Naive thymus-derived CD4-positive, alpha-beta T cell (primary cell): ENCODE measurements at regions of chr3 and their contacts with region 1.

Region 1: GRCh38 chr3:63863148-63864007 is at the starts of genes ATXN7 and THOC7:
- DNase-seq: peak; percentile 51 to 78 (median 74)
- ATAC-seq: peak; percentile 91
- H3K4me3 ChIP-seq: peak within 1 kb of the TSS; percentile 71
- H3K4me3 Mint-ChIP-seq: peak within 1 kb of the TSS; percentile 81 to 95 (median 93)
- H3K27ac ChIP-seq: peak within 1 kb of the TSS; percentile 84
- H3K27ac Mint-ChIP-seq: peak within 1 kb of the TSS; percentile 81 to 96 (median 93)
- H3K4me1 ChIP-seq: peaks cover 8 to 17% of the 10 kb centered on the region in 2 donors
- H3K4me1 Mint-ChIP-seq: peaks cover 39 to 74% (median 69%) of the 10 kb centered on the region in 7 donors
- H3K27me3 ChIP-seq: no peaks in the 10 kb centered on the region
- H3K27me3 Mint-ChIP-seq: no peaks in the 10 kb centered on the region
- total RNA-seq, gene ATXN7: 72.2 to 204 (median 160) TPM
- total RNA-seq, gene THOC7: 24.6 to 86.2 (median 38.7) TPM

Region 2: DNA sequence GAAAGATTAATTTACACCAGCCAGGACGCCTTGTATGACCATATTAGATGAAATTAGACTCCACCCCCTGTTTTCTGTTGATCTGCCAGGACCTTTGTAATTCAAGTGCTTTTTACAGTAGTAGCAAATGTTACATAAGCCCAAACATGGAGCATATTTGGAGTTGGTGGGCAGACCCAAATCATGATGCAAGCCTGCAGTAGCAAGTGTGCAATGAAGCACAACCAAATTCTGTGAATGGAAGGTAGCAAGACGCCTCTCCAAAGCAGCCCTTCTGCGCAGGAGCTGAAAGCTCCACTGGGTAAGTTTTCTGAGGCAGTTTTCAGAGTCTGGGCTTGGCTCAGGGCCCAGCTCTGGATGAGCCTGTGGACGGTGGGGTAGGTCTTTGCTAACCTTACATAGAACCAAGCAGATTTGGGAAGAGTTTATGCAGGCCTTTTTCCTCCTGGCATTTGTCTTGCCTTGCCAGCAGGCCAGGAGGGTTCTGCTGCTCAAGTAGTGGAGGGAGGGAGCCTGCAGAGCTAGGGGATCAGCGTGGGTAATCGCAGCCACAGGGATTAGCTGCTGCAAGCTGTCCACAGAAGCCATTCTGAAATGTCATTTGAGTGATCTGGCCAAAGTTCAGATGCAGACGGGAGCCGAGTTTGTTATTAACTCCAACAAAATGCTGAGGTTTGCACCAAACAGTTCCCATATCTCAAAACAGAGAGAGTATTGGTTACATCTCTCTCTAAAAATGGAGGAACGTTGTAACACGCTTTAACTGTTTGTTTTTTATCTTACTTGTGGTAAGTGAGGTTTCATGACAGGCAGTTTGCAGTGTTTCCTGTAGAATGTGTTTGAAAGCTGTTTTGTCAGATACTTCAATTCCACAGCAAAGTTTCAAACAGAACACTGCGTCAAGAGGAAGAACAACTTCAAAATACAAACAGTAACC is 104.6 kb after region 1 on chr3:
- CTCF ChIA-PET with region 1: no interaction called
- POLR2A ChIA-PET with region 1: interaction called, 4 read pairs
- intact Hi-C with region 1: loop called (anchors 2 to 5 kb)
- DNase-seq: peak; percentile 14 to 93 (median 87)
- ATAC-seq: peak; percentile 88
- H3K4me3 ChIP-seq: peak overlapping the region; percentile 91
- H3K4me3 Mint-ChIP-seq: peak overlapping the region; percentile 86 to 98 (median 92)
- H3K27ac ChIP-seq: peak overlapping the region; percentile 80
- H3K27ac Mint-ChIP-seq: peak overlapping the region; percentile 92 to 99 (median 96)
- H3K4me1 ChIP-seq: peaks cover 46 to 48% of the 10 kb centered on the region in 2 donors
- H3K4me1 Mint-ChIP-seq: peaks cover 43 to 78% (median 65%) of the 10 kb centered on the region in 7 donors
- H3K27me3 ChIP-seq: no peaks in the 10 kb centered on the region
- H3K27me3 Mint-ChIP-seq: no peaks in the 10 kb centered on the region

Region 3: GRCh38 chr3:64109438-64109837 is 246.1 kb after region 1 on chr3:
- CTCF ChIA-PET with region 1: no interaction called
- POLR2A ChIA-PET with region 1: no interaction called
- intact Hi-C with region 1: no loop called
- DNase-seq: no peak
- ATAC-seq: no peak
- H3K4me3 ChIP-seq: no peak overlapping the region
- H3K4me3 Mint-ChIP-seq: no peak overlapping the region
- H3K27ac ChIP-seq: no peak overlapping the region
- H3K27ac Mint-ChIP-seq: no peak overlapping the region
- H3K4me1 ChIP-seq: no peaks in the 10 kb centered on the region
- H3K4me1 Mint-ChIP-seq: peaks cover 0 to 2% (median 0%) of the 10 kb centered on the region in 7 donors
- H3K27me3 ChIP-seq: no peaks in the 10 kb centered on the region
- H3K27me3 Mint-ChIP-seq: peaks cover 0 to 36% (median 24%) of the 10 kb centered on the region in 5 donors